MCF 10A (cell line): ENCODE measurements at regions of chr2 and their contacts with region 1.

Region 1: GRCh38 chr2:43542285-43542937 is 53.4 kb downstream of the THADA start:
- DNase-seq: peak; percentile 64
- H3K4me3 Mint-ChIP-seq: no peak overlapping the region
- H3K27ac Mint-ChIP-seq: no peak overlapping the region
- H3K4me1 Mint-ChIP-seq: peaks cover 14% of the 10 kb centered on the region
- H3K27me3 Mint-ChIP-seq: no peaks in the 10 kb centered on the region
- CTCF ChIP-seq: peak; percentile 40

Region 2: DNA sequence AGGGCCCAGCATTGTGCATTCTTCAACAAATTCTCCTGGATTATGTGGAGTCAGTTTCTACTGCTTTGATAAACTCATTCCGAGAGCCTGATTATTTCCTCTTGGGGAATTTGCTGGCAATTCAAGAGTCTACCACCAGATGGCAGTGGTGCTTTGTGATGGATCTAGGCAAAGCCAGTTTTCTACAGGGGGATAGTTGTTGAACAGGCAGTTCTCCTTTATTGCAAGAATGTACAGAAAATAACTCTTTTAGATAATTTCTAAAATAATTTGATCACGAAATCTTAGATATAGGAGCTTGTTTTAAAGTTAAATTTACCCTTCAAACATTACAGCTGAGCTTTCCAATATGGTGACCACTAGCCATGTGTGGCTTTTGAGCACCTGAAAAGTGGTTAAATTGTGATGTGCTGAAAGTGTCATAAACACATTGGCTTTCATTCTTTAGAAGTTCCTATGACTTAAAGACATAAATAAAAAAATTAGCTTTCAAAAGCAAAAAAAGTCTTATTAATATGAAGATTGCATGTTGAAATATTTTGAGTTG is 683.3 kb before region 1 on chr2:
- CTCF ChIA-PET with region 1: interaction called, 4 read pairs
- POLR2A ChIA-PET with region 1: interaction called, 3 read pairs
- intact Hi-C with region 1: loop called (anchors 2 kb)
- DNase-seq: peak; percentile 82
- H3K4me3 Mint-ChIP-seq: no peak overlapping the region
- H3K27ac Mint-ChIP-seq: no peak overlapping the region
- H3K4me1 Mint-ChIP-seq: peaks cover 12% of the 10 kb centered on the region
- H3K27me3 Mint-ChIP-seq: no peaks in the 10 kb centered on the region
- CTCF ChIP-seq: peak; percentile 91

Region 3: DNA sequence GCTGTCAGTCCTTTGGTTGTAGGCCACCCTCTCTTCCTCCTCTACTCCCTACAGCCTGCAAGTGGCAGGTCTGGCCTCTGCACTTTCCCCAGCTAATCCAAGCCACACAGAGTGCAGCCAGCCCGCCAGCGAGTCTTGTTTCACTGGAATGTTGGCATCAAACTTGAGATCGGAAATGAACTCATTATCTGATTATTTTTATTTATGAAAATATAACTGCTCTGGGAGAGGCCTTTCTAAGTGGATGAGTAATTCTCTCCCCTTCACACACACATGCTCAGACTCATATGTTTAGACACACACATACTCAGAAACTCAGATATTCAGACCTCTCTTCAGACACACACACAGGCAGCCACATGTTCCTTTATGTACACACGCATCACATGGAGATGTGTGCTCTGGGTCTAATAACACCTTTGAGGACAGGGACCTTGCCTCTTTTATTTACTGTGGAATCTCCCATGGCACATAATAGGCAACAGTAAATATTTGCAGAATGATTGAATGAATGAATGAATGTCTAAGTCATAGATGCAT is 467.3 kb before region 1 on chr2:
- CTCF ChIA-PET with region 1: no interaction called
- POLR2A ChIA-PET with region 1: interaction called, 12 read pairs
- intact Hi-C with region 1: no loop called
- DNase-seq: peak; percentile 96
- H3K4me3 Mint-ChIP-seq: peak overlapping the region; percentile 76
- H3K27ac Mint-ChIP-seq: peak overlapping the region; percentile 89
- H3K4me1 Mint-ChIP-seq: peaks cover 64% of the 10 kb centered on the region
- H3K27me3 Mint-ChIP-seq: no peaks in the 10 kb centered on the region
- CTCF ChIP-seq: no peak

Region 4: DNA sequence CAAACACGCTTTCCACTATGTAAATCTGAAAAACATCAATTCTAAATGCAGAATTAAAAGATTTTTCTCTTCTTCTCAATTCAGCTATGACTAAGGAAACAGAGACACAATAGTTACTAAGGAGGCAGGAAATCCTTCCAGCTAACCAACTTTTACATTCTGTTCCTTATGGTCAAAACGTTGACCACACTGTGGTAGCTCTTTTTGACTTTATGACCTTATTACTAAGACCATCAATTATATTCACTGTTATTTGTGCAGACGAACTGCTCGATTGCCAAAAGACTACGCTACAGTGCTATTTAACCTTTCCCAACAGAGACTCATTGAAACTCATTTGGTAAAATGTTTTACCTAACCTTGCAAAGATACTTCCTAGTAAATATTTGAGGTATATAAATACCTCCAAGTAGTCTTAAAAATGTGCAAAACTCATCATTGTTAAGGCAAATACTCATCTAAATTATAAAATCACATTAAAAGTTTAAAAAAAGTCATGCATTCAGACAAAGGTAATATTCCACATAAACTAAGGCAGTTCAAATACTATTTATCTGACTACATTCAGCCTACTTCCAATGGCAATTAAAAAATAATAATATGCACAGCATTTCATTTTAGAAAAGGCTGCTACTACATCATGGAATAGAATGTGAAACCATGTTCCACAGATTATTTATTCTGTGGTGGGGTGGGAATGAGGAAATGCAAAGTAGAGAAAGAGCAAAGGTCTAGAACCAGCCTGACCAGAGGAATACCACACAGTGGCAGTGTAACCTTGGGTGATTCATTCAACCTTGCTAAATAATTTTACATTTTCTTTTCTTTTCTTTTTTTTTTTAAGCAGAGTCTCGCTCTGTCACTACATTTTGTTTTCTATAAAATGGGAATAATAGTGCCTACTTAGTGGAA is 86.4 kb before region 1 on chr2:
- CTCF ChIA-PET with region 1: interaction called, 5 read pairs
- POLR2A ChIA-PET with region 1: interaction called, 10 read pairs
- intact Hi-C with region 1: loop called (anchors 2 kb)
- DNase-seq: peak; percentile 48
- H3K4me3 Mint-ChIP-seq: no peak overlapping the region
- H3K27ac Mint-ChIP-seq: peak overlapping the region; percentile 78
- H3K4me1 Mint-ChIP-seq: peaks cover 47% of the 10 kb centered on the region
- H3K27me3 Mint-ChIP-seq: no peaks in the 10 kb centered on the region
- CTCF ChIP-seq: no peak

Region 5: GRCh38 chr2:43495727-43496126 is 46.7 kb before region 1 on chr2:
- CTCF ChIA-PET with region 1: interaction called, 4 read pairs
- POLR2A ChIA-PET with region 1: interaction called, 50 read pairs
- intact Hi-C with region 1: no loop called
- DNase-seq: peak; percentile 70
- H3K4me3 Mint-ChIP-seq: no peak overlapping the region
- H3K27ac Mint-ChIP-seq: peak overlapping the region; percentile 77
- H3K4me1 Mint-ChIP-seq: peaks cover 28% of the 10 kb centered on the region
- H3K27me3 Mint-ChIP-seq: no peaks in the 10 kb centered on the region
- CTCF ChIP-seq: no peak

Region 6: DNA sequence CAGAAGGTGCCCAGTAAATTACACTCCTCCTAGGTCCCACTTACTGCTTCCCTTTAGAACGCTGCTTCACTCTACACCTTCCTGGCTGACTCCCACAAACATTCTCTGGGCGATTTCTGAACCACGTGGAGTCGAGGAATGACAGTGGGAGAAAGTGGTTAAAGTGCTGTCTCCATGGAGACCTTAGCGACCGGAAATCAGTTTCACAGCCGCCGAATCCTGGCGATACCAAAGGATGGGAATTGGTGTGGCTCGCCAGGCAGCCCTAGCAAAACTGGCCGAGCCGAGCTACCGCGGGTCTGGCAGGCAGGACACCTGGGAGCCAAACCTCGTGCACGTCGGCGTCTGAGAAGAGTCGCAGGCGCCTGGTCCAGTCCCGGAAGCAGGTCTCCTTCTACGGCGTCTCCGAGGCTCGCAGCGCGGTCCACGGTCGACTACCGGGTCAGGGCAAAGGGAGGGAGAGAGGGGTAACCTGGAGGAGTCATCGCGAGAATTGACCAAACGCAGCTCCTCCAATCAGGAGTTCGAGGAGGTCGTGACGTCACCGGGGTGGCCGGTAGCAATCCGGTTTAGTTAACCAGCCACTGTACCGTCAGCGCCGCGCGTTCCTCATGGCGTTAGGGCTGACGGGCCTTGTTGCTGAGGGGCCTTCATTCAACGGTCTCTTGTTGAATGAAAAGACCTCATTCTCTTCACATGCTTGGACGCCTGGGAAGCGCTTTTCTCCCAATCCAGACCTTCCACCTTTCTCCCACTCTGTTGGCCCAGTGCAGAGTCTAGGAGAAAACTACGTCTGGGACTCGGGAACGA is 53.4 kb after region 1 on chr2 and contains the start of gene THADA:
- CTCF ChIA-PET with region 1: no interaction called
- POLR2A ChIA-PET with region 1: interaction called, 15 read pairs
- intact Hi-C with region 1: no loop called
- DNase-seq: peak; percentile 99
- H3K4me3 Mint-ChIP-seq: peak within 1 kb of the TSS; percentile 90
- H3K27ac Mint-ChIP-seq: peak within 1 kb of the TSS; percentile 99
- H3K4me1 Mint-ChIP-seq: peaks cover 17% of the 10 kb centered on the region
- H3K27me3 Mint-ChIP-seq: peaks cover 7% of the 10 kb centered on the region
- CTCF ChIP-seq: no peak
- total RNA-seq, gene THADA: 42.3 and 49.8 TPM in 2 replicates

Region 7: DNA sequence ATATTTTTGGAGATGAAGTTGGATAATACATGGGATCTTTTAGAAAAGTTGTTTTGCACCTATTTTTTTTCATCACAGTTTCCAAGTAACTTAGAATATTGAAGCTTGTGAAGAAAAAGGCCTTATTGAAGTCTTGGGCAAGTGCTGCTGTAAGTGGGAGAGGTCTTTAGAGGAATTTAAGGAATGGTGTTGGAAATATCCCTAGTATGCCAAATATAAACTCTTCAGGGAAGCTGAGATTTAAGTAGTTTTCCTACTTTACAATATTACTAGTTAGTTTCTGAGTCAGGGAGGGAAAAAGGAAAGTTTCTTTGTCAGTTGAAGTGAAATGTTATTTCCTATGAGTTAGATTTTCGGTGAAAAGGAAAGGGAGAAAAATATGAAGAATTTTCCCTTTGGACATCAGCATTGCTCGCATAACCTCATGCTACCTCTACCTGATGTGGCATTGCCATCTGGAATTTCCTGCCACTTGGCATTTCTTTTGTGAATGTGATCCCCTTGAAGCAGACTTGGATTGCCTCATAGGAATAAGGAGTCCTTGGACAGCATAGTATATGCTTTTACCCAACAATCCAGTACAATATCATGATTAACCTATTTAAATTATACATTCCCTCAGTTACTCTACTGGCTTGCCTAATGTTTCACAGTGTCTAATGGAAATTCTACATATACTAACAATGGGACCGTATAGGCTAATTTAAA is 106.7 kb after region 1 on chr2:
- CTCF ChIA-PET with region 1: no interaction called
- POLR2A ChIA-PET with region 1: no interaction called
- intact Hi-C with region 1: no loop called
- DNase-seq: no peak
- H3K4me3 Mint-ChIP-seq: no peak overlapping the region
- H3K27ac Mint-ChIP-seq: no peak overlapping the region
- H3K4me1 Mint-ChIP-seq: no peaks in the 10 kb centered on the region
- H3K27me3 Mint-ChIP-seq: peaks cover 24% of the 10 kb centered on the region
- CTCF ChIP-seq: no peak